Caco-2 (cell line): ENCODE measurements at regions of chr15 and their contacts with region 1.

Region 1: GRCh38 chr15:101439285-101439919 is 50.1 kb downstream of the PCSK6 start:
- DNase-seq: peak; percentile 73 to 77
- H3K4me3 ChIP-seq: no peak overlapping the region
- H3K4me3 Mint-ChIP-seq: peak overlapping the region; percentile 11
- H3K27ac Mint-ChIP-seq: peak overlapping the region; percentile 84
- H3K4me1 ChIP-seq: peaks cover 36% of the 10 kb centered on the region
- H3K4me1 Mint-ChIP-seq: peaks cover 36% of the 10 kb centered on the region
- H3K27me3 ChIP-seq: no peaks in the 10 kb centered on the region
- H3K27me3 Mint-ChIP-seq: no peaks in the 10 kb centered on the region
- CTCF ChIP-seq: no peak

Region 2: DNA sequence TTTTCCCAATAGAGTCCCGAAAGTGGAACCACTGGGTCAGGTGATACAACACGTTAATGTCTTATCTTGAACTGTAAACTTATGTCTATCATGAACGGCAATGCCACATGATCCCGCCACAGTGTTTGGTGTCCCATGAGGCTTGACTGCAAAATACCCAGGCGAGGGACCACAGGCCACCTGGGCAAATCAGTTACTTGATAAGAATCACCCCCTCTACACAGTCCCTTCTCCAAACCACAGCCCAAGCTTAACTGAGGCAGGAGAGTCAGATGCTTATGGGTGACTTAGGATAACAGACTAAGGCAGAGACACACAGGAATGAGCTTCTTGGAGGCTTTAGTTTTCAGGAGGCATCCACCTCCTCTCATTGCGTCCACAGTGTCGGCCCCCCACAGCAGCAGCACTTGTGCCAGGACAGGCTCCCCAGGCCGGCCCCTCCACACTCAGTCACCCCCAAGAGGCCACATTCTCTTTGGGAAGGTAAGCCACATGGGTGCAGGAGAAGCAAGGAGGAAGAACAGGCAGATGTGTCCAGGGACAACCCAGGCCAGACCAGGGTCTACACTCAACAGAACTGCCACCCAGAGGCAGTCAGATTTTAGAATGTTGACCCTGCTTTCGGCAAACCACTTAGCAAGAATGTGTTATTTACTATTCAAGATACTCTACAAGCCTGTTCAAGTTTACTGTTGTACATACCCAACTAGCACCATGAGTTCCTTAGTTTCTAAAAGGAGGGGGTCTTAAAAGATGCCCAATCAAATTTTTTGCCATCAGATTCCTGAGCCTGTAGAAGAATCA is 101.2 kb before region 1 on chr15:
- CTCF ChIA-PET with region 1: no interaction called
- POLR2A ChIA-PET with region 1: no interaction called
- intact Hi-C with region 1: no loop called
- DNase-seq: no peak
- H3K4me3 ChIP-seq: no peak overlapping the region
- H3K4me3 Mint-ChIP-seq: no peak overlapping the region
- H3K27ac Mint-ChIP-seq: no peak overlapping the region
- H3K4me1 ChIP-seq: no peaks in the 10 kb centered on the region
- H3K4me1 Mint-ChIP-seq: no peaks in the 10 kb centered on the region
- H3K27me3 ChIP-seq: no peaks in the 10 kb centered on the region
- H3K27me3 Mint-ChIP-seq: no peaks in the 10 kb centered on the region
- CTCF ChIP-seq: no peak

Region 3: GRCh38 chr15:101348643-101349548 is 90.5 kb before region 1 on chr15:
- CTCF ChIA-PET with region 1: no interaction called
- POLR2A ChIA-PET with region 1: no interaction called
- intact Hi-C with region 1: loop called (anchors 1 kb)
- DNase-seq: peak; percentile 65 to 67
- H3K4me3 ChIP-seq: no peak overlapping the region
- H3K4me3 Mint-ChIP-seq: peak overlapping the region; percentile 11
- H3K27ac Mint-ChIP-seq: peak overlapping the region; percentile 48
- H3K4me1 ChIP-seq: peaks cover 18% of the 10 kb centered on the region
- H3K4me1 Mint-ChIP-seq: peaks cover 17% of the 10 kb centered on the region
- H3K27me3 ChIP-seq: no peaks in the 10 kb centered on the region
- H3K27me3 Mint-ChIP-seq: no peaks in the 10 kb centered on the region
- CTCF ChIP-seq: no peak

Region 4: GRCh38 chr15:101381671-101382212 is 57.7 kb before region 1 on chr15:
- CTCF ChIA-PET with region 1: no interaction called
- POLR2A ChIA-PET with region 1: no interaction called
- intact Hi-C with region 1: no loop called
- DNase-seq: no peak
- H3K4me3 ChIP-seq: no peak overlapping the region
- H3K4me3 Mint-ChIP-seq: no peak overlapping the region
- H3K27ac Mint-ChIP-seq: no peak overlapping the region
- H3K4me1 ChIP-seq: no peaks in the 10 kb centered on the region
- H3K4me1 Mint-ChIP-seq: no peaks in the 10 kb centered on the region
- H3K27me3 ChIP-seq: no peaks in the 10 kb centered on the region
- H3K27me3 Mint-ChIP-seq: no peaks in the 10 kb centered on the region
- CTCF ChIP-seq: no peak

Region 5: DNA sequence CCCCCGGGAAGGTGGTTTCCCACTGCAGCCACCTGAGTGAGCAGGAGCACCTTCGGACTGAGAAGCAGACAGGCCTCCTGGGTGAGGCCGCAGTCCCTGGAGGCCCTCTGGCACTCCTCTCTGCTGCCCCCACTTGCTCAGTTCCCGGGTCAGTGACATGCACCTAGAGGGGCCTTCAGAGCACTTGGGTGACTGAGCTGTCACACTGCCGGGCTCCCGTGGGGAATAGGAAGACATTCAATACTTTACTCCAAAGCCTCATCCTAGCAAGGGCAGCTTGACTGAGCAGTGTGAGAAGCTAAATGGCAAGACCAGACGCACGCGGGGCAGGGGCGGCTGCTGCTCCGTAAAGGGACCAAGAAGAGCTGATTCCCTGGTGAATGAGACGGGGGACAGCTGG is 12.5 kb before region 1 on chr15:
- CTCF ChIA-PET with region 1: no interaction called
- POLR2A ChIA-PET with region 1: no interaction called
- intact Hi-C with region 1: no loop called
- DNase-seq: no peak
- H3K4me3 ChIP-seq: no peak overlapping the region
- H3K4me3 Mint-ChIP-seq: no peak overlapping the region
- H3K27ac Mint-ChIP-seq: no peak overlapping the region
- H3K4me1 ChIP-seq: no peaks in the 10 kb centered on the region
- H3K4me1 Mint-ChIP-seq: no peaks in the 10 kb centered on the region
- H3K27me3 ChIP-seq: no peaks in the 10 kb centered on the region
- H3K27me3 Mint-ChIP-seq: no peaks in the 10 kb centered on the region
- CTCF ChIP-seq: no peak

Region 6: DNA sequence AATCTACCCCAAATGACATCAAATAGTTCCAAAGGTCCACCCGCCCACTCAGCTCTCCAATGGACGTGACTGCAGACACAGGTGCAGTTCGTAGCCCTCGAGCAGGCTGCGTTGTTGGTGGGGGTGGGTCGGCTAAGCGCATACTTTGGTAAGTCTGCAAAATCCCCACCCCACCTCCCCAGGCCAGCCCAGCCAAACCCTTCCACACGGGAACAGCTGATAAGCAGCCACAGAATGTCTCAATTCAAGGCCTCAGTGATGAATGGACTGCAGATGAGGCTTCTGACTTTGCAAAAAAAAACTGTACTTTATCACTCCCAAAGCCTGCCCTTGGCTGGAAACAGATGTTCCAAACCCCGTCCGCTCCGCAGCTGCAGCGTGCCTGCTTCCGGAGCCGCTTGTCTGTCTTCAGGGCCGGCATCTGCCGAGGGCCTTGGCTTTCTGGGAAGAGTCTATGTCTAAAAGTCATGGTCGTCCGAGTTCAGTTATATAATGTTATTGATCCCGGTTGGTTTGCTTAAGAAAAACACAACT is 11.9 kb after region 1 on chr15:
- CTCF ChIA-PET with region 1: no interaction called
- POLR2A ChIA-PET with region 1: no interaction called
- intact Hi-C with region 1: no loop called
- DNase-seq: peak in 1 of 2 experiments; percentile 13
- H3K4me3 ChIP-seq: no peak overlapping the region
- H3K4me3 Mint-ChIP-seq: no peak overlapping the region
- H3K27ac Mint-ChIP-seq: peak overlapping the region; percentile 61
- H3K4me1 ChIP-seq: peaks cover 24% of the 10 kb centered on the region
- H3K4me1 Mint-ChIP-seq: peaks cover 13% of the 10 kb centered on the region
- H3K27me3 ChIP-seq: no peaks in the 10 kb centered on the region
- H3K27me3 Mint-ChIP-seq: no peaks in the 10 kb centered on the region
- CTCF ChIP-seq: no peak

Region 7: GRCh38 chr15:101477851-101478362 is 38.5 kb after region 1 on chr15:
- CTCF ChIA-PET with region 1: no interaction called
- POLR2A ChIA-PET with region 1: interaction called, 3 read pairs
- intact Hi-C with region 1: loop called (anchors 1 kb)
- DNase-seq: peak; percentile 88 to 94
- H3K4me3 ChIP-seq: no peak overlapping the region
- H3K4me3 Mint-ChIP-seq: peak overlapping the region; percentile 56
- H3K27ac Mint-ChIP-seq: peak overlapping the region; percentile 97
- H3K4me1 ChIP-seq: peaks cover 62% of the 10 kb centered on the region
- H3K4me1 Mint-ChIP-seq: peaks cover 60% of the 10 kb centered on the region
- H3K27me3 ChIP-seq: no peaks in the 10 kb centered on the region
- H3K27me3 Mint-ChIP-seq: no peaks in the 10 kb centered on the region
- CTCF ChIP-seq: no peak

Region 8: GRCh38 chr15:101489236-101489632 is 49.8 kb after region 1 on chr15:
- CTCF ChIA-PET with region 1: interaction called, 7 read pairs
- POLR2A ChIA-PET with region 1: no interaction called
- intact Hi-C with region 1: loop called (anchors 2 kb)
- DNase-seq: peak; percentile 68 to 81
- H3K4me3 ChIP-seq: peak overlapping the region; percentile 69
- H3K4me3 Mint-ChIP-seq: peak overlapping the region; percentile 54
- H3K27ac Mint-ChIP-seq: no peak overlapping the region
- H3K4me1 ChIP-seq: no peaks in the 10 kb centered on the region
- H3K4me1 Mint-ChIP-seq: peaks cover 16% of the 10 kb centered on the region
- H3K27me3 ChIP-seq: no peaks in the 10 kb centered on the region
- H3K27me3 Mint-ChIP-seq: peaks cover 3% of the 10 kb centered on the region
- CTCF ChIP-seq: peak in 1 of 2 experiments; percentile 6

Region 9: DNA sequence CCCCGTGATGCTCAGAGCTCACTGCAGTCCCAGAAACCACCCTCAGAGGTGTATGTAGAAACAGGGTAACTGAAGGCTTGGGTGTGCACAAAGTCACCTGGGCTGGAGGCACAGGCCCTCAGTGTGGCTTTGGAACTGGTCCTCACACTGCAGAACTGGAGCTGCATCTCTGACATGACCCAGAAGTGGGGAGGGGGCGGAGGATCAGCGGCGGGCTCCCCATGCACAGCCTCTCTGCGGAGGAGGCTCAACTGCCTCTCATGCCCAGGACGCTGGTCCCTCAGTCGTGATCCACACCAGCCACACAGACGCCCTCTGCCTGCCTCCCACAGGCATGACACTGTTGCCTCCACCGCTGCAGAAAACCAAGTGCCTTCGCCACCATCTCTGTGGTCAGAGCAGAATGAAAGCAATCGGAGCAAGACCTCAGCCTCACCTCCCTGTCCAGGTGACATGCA is 139.1 kb after region 1 on chr15:
- CTCF ChIA-PET with region 1: no interaction called
- POLR2A ChIA-PET with region 1: no interaction called
- intact Hi-C with region 1: loop called (anchors 5 kb)
- DNase-seq: peak; percentile 52 to 54
- H3K4me3 ChIP-seq: no peak overlapping the region
- H3K4me3 Mint-ChIP-seq: no peak overlapping the region
- H3K27ac Mint-ChIP-seq: no peak overlapping the region
- H3K4me1 ChIP-seq: no peaks in the 10 kb centered on the region; the same call in 1 of the 2 replicates
- H3K4me1 Mint-ChIP-seq: peaks cover 6% of the 10 kb centered on the region
- H3K27me3 ChIP-seq: no peaks in the 10 kb centered on the region
- H3K27me3 Mint-ChIP-seq: no peaks in the 10 kb centered on the region
- CTCF ChIP-seq: peak; percentile 35 to 63

Region 10: DNA sequence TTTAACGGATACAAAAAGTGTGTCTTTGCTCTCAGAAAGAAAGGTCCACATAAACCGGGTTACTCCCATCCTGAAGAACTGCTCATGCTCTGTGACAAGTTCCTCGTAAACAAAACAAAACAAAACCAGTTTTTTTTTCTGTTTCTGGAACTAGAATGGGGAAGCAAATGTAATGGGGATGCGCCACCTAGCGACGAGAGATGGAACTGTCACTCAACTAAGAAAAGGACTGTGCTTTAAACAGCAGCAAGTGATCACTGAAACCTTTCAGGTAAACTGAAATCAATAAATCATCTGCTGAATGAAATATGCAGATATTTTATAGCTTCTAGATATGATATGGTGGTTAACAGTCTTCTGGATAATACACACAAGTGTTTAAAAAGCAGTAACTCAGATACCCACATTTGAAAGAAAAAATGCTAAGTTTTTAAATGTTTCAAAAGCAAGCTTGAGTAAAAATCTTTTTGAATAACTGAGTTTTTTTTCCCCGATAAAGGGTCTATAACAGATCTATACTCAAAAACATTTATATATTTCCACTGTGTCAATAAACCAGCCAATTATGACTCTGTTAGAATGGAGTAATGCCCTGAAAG is 201.9 kb after region 1 on chr15:
- CTCF ChIA-PET with region 1: no interaction called
- POLR2A ChIA-PET with region 1: no interaction called
- intact Hi-C with region 1: loop called (anchors 1 kb)
- DNase-seq: peak in 1 of 2 experiments; percentile 71
- H3K4me3 ChIP-seq: no peak overlapping the region
- H3K4me3 Mint-ChIP-seq: no peak overlapping the region
- H3K27ac Mint-ChIP-seq: no peak overlapping the region
- H3K4me1 ChIP-seq: peaks cover 13% of the 10 kb centered on the region
- H3K4me1 Mint-ChIP-seq: peaks cover 8% of the 10 kb centered on the region
- H3K27me3 ChIP-seq: no peaks in the 10 kb centered on the region
- H3K27me3 Mint-ChIP-seq: no peaks in the 10 kb centered on the region
- CTCF ChIP-seq: peak; percentile 83 to 87